PC-3 (cell line): ENCODE measurements at regions of chr4 and their contacts with region 1.

Region 1: DNA sequence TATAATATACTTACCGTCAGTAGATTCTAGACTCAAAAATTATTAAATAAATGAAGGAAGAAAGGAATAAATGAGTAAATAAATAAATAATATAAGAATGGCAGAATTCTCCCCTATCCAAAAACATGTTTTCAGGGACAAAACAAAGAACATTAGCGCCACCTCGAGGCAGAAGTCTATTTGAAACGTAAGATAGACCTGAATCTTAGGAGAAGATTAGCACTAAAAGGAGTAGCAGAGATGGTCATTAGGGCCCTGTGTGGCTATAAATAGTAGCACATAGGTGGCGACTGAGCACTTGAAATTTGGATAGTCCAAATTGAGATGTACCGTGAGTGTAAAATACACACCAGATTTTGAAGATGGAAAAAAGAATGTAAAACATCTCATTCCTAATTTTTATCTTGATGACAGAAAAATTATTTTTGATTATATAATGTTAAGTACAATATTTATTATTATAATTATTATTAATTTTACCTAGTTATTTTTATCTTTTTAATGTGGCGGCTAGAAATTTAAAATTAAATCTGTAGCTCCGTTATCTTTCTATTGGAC is 24.3 kb upstream of the SRD5A3 start:
- DNase-seq: peak; percentile 98
- ATAC-seq: peak; percentile 70
- H3K4me3 ChIP-seq: no peak overlapping the region
- H3K27ac ChIP-seq: no peak overlapping the region
- H3K4me1 ChIP-seq: peaks cover 11% of the 10 kb centered on the region
- H3K27me3 ChIP-seq: no peaks in the 10 kb centered on the region
- CTCF ChIP-seq: peak; percentile 92

Region 2: GRCh38 chr4:54971474-54971950 is 350.3 kb before region 1 on chr4:
- CTCF ChIA-PET with region 1: interaction called, 4 read pairs
- POLR2A ChIA-PET with region 1: no interaction called
- intact Hi-C with region 1: loop called (anchors 1 kb)
- DNase-seq: peak; percentile 75
- ATAC-seq: peak; percentile 93
- H3K4me3 ChIP-seq: no peak overlapping the region
- H3K27ac ChIP-seq: no peak overlapping the region
- H3K4me1 ChIP-seq: no peaks in the 10 kb centered on the region
- H3K27me3 ChIP-seq: peaks cover 4% of the 10 kb centered on the region; the same call in 1 of the 2 replicates
- CTCF ChIP-seq: peak; percentile 98

Region 3: GRCh38 chr4:55124322-55125076 is 197.3 kb before region 1 on chr4:
- CTCF ChIA-PET with region 1: no interaction called
- POLR2A ChIA-PET with region 1: no interaction called
- intact Hi-C with region 1: loop called (anchors 5 kb)
- DNase-seq: no peak
- ATAC-seq: no peak
- H3K4me3 ChIP-seq: peak overlapping the region; percentile 69; the same call in 1 of the 2 replicates
- H3K27ac ChIP-seq: no peak overlapping the region
- H3K4me1 ChIP-seq: peaks cover 11% of the 10 kb centered on the region; the same call in 1 of the 2 replicates
- H3K27me3 ChIP-seq: 0 out of 2 replicates have a peak, but pooled peaks cover 4% of the 10 kb centered on the region
- CTCF ChIP-seq: no peak

Region 4: GRCh38 chr4:55503164-55503563 is 181.4 kb after region 1 on chr4:
- CTCF ChIA-PET with region 1: no interaction called
- POLR2A ChIA-PET with region 1: no interaction called
- intact Hi-C with region 1: no loop called
- DNase-seq: peak; percentile 85
- ATAC-seq: peak; percentile 98
- H3K4me3 ChIP-seq: no peak overlapping the region
- H3K27ac ChIP-seq: peak overlapping the region; percentile 35
- H3K4me1 ChIP-seq: peaks cover 10% of the 10 kb centered on the region
- H3K27me3 ChIP-seq: no peaks in the 10 kb centered on the region
- CTCF ChIP-seq: no peak

Region 5: GRCh38 chr4:55554453-55555030 is 232.8 kb after region 1 on chr4:
- CTCF ChIA-PET with region 1: no interaction called
- POLR2A ChIA-PET with region 1: no interaction called
- intact Hi-C with region 1: loop called (anchors 2 kb)
- DNase-seq: peak; percentile 71
- ATAC-seq: 0 out of 2 replicates have a peak, but pooled peaks have one; percentile 4
- H3K4me3 ChIP-seq: no peak overlapping the region
- H3K27ac ChIP-seq: no peak overlapping the region
- H3K4me1 ChIP-seq: peaks cover 26% of the 10 kb centered on the region
- H3K27me3 ChIP-seq: no peaks in the 10 kb centered on the region
- CTCF ChIP-seq: peak; percentile 83

Region 6: GRCh38 chr4:55736605-55737183 is 414.9 kb after region 1 on chr4:
- CTCF ChIA-PET with region 1: no interaction called
- POLR2A ChIA-PET with region 1: no interaction called
- intact Hi-C with region 1: loop called (anchors 5 kb)
- DNase-seq: peak; percentile 64
- ATAC-seq: no peak
- H3K4me3 ChIP-seq: no peak overlapping the region
- H3K27ac ChIP-seq: no peak overlapping the region
- H3K4me1 ChIP-seq: peaks cover 15% of the 10 kb centered on the region
- H3K27me3 ChIP-seq: no peaks in the 10 kb centered on the region
- CTCF ChIP-seq: peak; percentile 77